ENCODE measurements at regions of chr21 and their contacts with region 1.

Region 1: DNA sequence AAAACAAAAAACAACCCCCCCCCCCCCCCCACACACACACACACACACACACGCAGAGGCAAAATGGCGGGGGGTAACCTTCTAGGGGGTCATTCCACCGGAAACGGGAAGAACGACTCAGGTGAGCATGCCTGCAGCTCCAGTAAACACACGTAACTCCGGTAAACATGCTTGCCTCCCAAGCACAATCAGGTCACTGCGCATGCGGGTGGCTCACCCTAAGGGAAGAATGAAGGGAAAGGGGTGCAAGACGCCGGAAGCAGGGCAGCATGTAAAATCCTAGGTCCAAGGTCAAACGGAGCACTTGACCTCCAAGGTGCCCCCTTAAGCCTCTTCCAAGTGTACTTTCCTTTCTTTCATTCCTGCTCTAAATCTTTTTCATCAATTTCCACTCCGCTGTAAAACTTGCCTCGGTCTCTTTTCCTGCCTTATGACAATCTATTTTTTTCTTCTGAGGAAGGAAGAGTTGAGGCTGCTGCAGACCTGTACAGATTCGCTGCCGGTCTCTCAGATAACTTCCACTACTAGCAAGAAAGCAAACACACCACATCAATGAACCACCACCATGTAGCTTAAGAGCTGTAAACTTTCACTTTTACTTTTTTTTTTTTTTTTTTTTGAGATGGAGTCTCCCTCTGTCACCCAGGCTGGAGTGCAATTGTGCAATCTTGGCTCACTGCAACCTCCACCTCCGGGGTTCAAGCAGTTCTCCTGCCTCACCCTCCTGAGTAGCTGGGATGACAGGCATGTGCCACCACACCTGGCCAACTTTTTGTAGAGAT is 21.0 kb upstream of the CBR3 start:
- DNase-seq: peak in 1 of 6 donors; percentile 39
- ATAC-seq: peak in 3 of 4 donors; percentile 13 to 48 (median 30)
- H3K4me3 ChIP-seq: peak overlapping the region in 1 of 4 donors; percentile 10
- H3K27ac ChIP-seq: no peak overlapping the region
- H3K4me1 ChIP-seq: no peaks in the 10 kb centered on the region
- H3K27me3 ChIP-seq: no peaks in the 10 kb centered on the region
- CTCF ChIP-seq: no peak

Region 2: DNA sequence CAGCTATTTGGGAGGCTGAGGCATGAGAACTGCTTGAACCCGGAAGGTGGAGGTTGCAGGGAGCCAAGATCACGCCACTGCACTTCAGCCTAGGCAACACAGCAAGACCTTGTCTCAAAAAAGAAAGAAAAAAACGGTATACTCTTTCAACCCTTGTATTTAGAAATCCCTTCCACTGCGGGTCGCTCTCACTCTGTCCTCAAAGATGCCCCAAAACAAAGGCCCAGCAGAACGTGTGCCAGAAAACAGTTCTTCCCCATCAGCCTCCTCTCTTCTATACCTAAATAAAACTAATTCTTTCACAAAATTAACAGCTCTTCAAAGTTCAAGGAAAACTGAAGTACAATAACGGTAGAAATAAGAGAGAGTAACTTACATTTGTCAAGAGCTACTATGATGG is 66.7 kb before region 1 on chr21:
- intact Hi-C with region 1: loop called in 1 of 3 experiments (anchors 10 kb)
- DNase-seq: no peak
- ATAC-seq: no peak
- H3K4me3 ChIP-seq: no peak overlapping the region
- H3K27ac ChIP-seq: no peak overlapping the region
- H3K4me1 ChIP-seq: no peaks in the 10 kb centered on the region
- H3K27me3 ChIP-seq: no peaks in the 10 kb centered on the region
- CTCF ChIP-seq: no peak

Region 3: DNA sequence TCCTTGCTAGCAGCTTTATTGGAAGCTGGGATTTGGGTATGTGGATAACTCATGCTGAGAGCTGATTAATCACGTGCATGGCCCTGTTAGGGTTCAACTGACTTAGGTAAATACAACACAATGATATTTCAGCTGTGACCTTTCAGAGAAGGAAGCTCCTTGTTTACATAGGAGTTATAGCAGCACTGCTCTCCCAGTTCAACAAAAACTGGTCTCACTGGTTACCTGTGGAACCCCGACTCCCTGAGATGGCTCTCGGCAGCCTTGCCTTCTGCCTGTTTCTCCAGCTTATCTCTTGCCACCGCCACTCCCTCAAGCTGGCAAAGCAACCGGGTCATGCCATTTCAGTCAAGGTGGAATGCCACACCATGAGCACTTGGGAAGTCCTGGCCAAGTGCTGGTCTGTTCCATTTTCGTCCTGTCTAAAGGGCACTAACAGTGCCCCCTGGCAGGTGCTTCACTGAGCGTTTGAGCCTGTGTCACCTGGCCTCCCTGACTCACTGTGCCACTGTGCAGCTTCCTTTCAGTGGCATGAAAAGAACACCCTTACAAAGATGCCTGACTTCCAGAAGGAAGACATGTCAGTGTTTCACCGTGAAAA is 74.3 kb after region 1 on chr21:
- intact Hi-C with region 1: no loop called
- DNase-seq: peak; percentile 60 to 79 (median 69)
- ATAC-seq: peak; percentile 86 to 95 (median 92)
- H3K4me3 ChIP-seq: no peak overlapping the region
- H3K27ac ChIP-seq: peak overlapping the region in 3 of 4 donors; percentile 8 to 29 (median 15)
- H3K4me1 ChIP-seq: peaks cover 0 to 14% (median 13%) of the 10 kb centered on the region in 3 donors
- H3K27me3 ChIP-seq: no peaks in the 10 kb centered on the region
- CTCF ChIP-seq: no peak

Measured in pancreas (tissue), 10 donors.